Adrenal gland (tissue), 19 donors: ENCODE measurements at regions of chr18 and their contacts with region 1.

Region 1: GRCh38 chr18:22169007-22169864 is at the start of gene GATA6:
- DNase-seq: peak; percentile 93 to 97 (median 96)
- H3K4me3 ChIP-seq: peak within 1 kb of the TSS; percentile 77 to 99 (median 93)
- H3K27ac ChIP-seq: peak within 1 kb of the TSS; percentile 97 to 99 (median 98)
- H3K4me1 ChIP-seq: peaks cover 5 to 9% of the 10 kb centered on the region in 2 donors
- H3K27me3 ChIP-seq: no peaks in the 10 kb centered on the region
- CTCF ChIP-seq: peak in 3 of 6 experiments; percentile 12 to 33 (median 23)
- POLR2A ChIP-seq: peak; percentile 98 to 99
- total RNA-seq, gene GATA6: 33.1 to 222 (median 141) TPM

Region 2: GRCh38 chr18:21914739-21915319 is 254.4 kb before region 1 on chr18:
- intact Hi-C with region 1: loop called in 1 of 2 experiments (anchors 10 kb)
- DNase-seq: peak in 6 of 7 donors; percentile 37 to 58 (median 46)
- H3K4me3 ChIP-seq: no peak overlapping the region
- H3K27ac ChIP-seq: no peak overlapping the region
- H3K4me1 ChIP-seq: no peaks in the 10 kb centered on the region
- H3K27me3 ChIP-seq: no peaks in the 10 kb centered on the region
- CTCF ChIP-seq: peak; percentile 61 to 76 (median 66)
- POLR2A ChIP-seq: no peak

Region 3: DNA sequence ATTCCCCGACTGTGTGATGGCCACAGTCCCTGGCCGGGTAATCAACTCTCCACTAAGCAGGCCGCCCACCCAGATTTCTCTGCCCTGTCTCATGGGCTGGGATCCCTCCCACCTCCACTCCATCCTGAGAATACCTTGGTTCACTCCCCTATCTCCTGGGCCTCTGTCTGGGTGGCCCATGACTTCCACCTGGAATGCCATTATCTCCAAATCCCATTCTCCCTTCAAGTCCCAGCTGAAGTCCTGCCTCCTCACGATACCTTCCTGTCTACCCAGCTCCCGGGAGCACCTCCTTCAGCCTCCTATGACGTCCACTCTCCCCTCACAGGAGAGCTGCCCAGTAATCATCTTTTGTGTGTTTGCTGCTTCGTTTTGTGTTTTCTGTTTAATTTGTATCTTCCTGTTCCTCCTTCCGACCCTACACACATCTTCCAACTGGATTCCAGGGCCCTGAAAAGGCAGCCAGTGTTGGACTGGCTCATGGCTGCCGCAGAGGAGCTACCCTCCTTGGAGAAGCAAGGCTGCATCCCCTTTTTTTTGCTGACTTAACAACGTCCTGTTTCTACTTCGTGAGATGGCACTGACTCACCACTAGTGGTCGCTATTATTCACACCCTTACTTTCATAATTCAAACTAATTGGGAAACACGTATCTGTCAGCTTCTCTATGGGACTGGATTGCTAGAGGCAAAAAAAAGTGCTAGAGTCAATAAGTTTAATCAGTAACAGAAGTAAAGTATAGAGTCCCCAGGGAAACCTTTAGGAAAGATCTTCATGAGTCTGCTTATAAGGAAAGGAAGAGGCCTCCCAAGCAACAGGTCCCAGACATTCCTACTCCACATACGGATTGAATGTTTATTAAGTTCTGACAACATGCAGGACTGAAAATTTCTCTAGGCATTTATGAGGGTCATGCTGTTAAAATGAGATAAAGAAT is 171.8 kb before region 1 on chr18:
- intact Hi-C with region 1: loop called (anchors 5 to 10 kb)
- DNase-seq: peak in 5 of 7 donors; percentile 18 to 58 (median 30)
- H3K4me3 ChIP-seq: no peak overlapping the region
- H3K27ac ChIP-seq: peak overlapping the region in 2 of 5 donors; percentile 19 to 68
- H3K4me1 ChIP-seq: peaks cover 0 to 8% of the 10 kb centered on the region in 2 donors
- H3K27me3 ChIP-seq: no peaks in the 10 kb centered on the region
- CTCF ChIP-seq: peak; percentile 75 to 81 (median 78)
- POLR2A ChIP-seq: no peak

Region 4: DNA sequence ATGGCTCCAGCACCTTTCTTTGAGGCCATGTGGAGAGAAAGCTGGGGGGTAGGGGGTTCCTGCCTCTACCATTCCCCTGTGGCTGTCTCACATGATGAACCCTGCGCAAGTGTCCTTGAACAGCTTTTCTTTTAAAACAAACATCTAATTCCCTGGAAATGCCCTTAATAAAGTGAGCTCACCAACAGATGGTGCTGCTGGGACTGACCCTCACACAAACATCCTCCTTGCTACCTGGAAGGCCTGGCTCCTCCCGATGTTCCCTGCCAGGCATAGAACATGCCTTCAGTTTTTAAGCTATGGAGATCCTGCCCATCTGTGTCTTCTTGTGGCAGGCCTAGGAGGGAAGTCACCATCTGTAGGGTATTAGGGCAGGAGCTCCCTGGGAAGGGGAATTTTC is 60.6 kb before region 1 on chr18:
- intact Hi-C with region 1: loop called in 1 of 2 experiments (anchors 10 kb)
- DNase-seq: peak in 4 of 7 donors; percentile 18 to 39 (median 24)
- H3K4me3 ChIP-seq: no peak overlapping the region
- H3K27ac ChIP-seq: no peak overlapping the region
- H3K4me1 ChIP-seq: no peaks in the 10 kb centered on the region
- H3K27me3 ChIP-seq: no peaks in the 10 kb centered on the region
- CTCF ChIP-seq: peak in 2 of 6 experiments; percentile 11 to 20
- POLR2A ChIP-seq: no peak

Region 5: DNA sequence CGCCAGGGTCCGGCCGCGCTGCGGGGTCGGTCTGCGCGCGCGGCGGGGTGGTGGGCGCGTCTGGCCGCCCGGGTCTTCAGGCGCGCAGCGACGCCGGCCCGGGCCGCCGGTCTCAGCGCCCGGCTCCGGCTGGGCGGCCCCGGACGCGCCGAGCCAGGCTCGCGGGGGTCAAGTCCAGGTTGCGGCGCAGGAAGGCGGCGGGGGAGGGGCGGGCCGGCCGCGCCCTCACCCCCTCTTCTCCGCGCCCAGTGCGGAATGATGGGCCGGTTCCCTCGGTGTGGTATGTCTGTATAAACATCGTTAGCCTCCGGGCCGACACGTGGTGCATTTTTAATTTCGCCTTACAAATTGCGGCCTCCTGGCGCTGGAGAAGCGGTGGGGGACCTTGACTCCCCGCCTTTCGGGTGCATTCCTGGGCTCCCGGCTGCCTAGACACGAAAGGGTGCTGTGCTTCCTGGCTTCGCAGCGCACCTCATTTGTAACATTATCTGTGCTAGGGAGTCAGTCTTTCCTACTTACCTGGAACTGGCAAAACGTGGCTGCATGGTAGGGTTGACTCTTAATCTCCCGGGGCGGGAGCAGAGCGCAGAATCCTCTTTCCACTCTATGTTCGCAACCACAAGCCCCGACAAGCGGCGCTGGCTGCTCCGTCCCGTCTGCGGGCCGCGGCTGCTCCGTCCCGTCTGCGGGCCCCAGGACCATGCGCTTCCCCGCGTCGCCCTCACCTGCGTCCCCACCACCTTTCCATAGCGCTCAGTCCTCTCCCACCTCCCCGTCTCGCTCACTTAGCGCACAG is 179.5 kb after region 1 on chr18:
- intact Hi-C with region 1: loop called (anchors 5 to 10 kb)
- DNase-seq: peak; percentile 66 to 90 (median 79)
- H3K4me3 ChIP-seq: peak overlapping the region in 2 of 4 donors; percentile 36 to 62
- H3K27ac ChIP-seq: peak overlapping the region; percentile 78 to 96 (median 93)
- H3K4me1 ChIP-seq: peaks cover 31 to 45% of the 10 kb centered on the region in 2 donors
- H3K27me3 ChIP-seq: no peaks in the 10 kb centered on the region
- CTCF ChIP-seq: no peak
- POLR2A ChIP-seq: peak; percentile 56 to 70

Region 6: DNA sequence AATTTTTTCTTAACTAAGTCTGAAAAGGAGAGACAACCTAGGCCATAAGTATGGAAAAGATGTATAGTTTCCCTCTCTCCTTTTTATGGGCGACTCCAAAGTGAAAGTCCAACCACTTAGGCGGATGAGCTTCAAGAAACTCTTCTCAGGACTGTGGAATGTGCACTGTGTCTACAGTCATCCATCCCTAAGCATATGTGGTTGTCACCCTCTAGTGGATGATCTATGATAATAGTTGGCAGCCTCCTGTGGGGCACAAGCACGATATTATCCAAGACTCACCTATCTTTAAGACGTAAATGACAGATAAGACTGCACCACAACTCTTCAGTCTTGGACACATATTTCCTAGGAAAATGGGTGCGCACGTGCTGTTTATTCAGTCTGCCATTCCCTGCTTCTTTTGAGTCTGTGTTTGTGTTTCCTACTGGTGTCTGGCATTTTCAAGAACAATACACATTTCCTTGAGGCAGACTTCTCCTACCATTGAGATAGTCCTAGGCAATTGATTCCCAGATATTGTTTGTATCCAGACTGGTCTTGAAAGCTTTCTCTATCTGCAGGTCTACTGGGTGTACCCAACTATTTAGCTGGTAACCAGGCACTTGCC is 394.0 kb after region 1 on chr18:
- intact Hi-C with region 1: loop called (anchors 10 kb)
- DNase-seq: peak; percentile 56 to 76 (median 61)
- H3K4me3 ChIP-seq: peak overlapping the region in 1 of 4 donors; percentile 17
- H3K27ac ChIP-seq: peak overlapping the region in 3 of 5 donors; percentile 4 to 36 (median 26)
- H3K4me1 ChIP-seq: peaks cover 9 to 22% of the 10 kb centered on the region in 2 donors
- H3K27me3 ChIP-seq: no peaks in the 10 kb centered on the region
- CTCF ChIP-seq: peak; percentile 52 to 93 (median 86)
- POLR2A ChIP-seq: no peak

Region 7: GRCh38 chr18:22703883-22704585 is 534.8 kb after region 1 on chr18:
- intact Hi-C with region 1: loop called in 1 of 2 experiments (anchors 10 kb)
- DNase-seq: peak in 2 of 7 donors; percentile 44 to 47
- H3K4me3 ChIP-seq: no peak overlapping the region
- H3K27ac ChIP-seq: peak overlapping the region in 1 of 5 donors; percentile 18
- H3K4me1 ChIP-seq: peaks cover 18 to 23% of the 10 kb centered on the region in 2 donors
- H3K27me3 ChIP-seq: no peaks in the 10 kb centered on the region
- CTCF ChIP-seq: peak; percentile 78 to 87 (median 84)
- POLR2A ChIP-seq: no peak